HAP-1 (cell line): ENCODE measurements at regions of chr15 and their contacts with region 1.

Region 1: DNA sequence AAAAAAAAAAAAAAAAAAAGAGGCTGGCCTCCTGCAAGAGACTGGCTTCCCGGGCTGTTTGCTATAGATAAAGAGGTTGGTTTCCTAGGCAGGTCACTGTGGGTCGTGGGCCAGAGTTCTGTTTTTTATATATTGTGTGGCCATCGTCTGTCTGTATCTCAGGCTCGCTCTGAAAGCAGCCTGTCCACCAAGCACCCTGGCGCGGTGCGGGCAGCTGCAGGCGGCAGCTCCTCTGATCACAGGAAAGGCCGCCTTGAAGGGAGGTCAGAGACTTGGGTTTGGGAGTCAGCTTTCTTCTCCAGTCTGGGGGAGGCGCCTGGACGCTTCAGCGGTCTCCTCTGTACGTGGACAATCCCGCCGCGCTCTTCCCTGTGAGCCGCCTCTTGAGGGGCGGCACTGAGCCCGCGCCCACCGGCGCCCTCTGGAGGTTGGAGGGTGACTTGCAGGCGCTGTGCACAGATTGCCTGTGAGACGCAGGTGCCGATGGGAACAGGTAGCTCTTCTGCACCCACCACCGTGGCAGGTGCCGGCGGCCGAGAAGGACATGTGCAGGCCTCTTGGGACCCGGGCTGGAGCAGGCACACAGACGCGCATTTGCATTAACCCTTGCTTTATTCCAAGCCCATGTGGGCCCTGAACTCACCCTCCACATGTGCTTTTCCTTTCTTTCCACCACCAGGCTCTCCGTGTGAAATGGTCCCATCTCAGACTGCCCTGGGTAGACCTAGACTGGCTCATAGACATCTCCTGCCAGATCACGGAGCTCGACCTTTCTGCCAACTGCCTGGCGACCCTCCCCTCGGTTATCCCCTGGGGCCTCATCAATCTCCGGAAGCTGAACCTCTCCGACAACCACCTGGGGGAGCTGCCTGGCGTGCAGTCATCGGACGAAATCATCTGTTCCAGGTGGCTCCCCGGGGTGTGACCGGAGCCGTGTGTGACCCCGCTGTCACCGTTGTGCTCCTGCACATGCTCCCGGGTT is 89.3 kb downstream of the LRRK1 start:
- DNase-seq: peak; percentile 69 to 91
- H3K4me3 ChIP-seq: peak overlapping the region; percentile 26
- H3K4me1 ChIP-seq: peaks cover 8% of the 10 kb centered on the region; the same call in 1 of the 2 replicates
- H3K27me3 ChIP-seq: no peaks in the 10 kb centered on the region

Region 2: GRCh38 chr15:100627789-100628395 is 380.6 kb before region 1 on chr15:
- in situ Hi-C with region 1: loop called (anchors 5 kb)
- DNase-seq: peak; percentile 33 to 65
- H3K4me3 ChIP-seq: no peak overlapping the region
- H3K4me1 ChIP-seq: no peaks in the 10 kb centered on the region
- H3K27me3 ChIP-seq: no peaks in the 10 kb centered on the region